ENCODE measurements at regions of chr2 and their contacts with region 1.

Region 1: DNA sequence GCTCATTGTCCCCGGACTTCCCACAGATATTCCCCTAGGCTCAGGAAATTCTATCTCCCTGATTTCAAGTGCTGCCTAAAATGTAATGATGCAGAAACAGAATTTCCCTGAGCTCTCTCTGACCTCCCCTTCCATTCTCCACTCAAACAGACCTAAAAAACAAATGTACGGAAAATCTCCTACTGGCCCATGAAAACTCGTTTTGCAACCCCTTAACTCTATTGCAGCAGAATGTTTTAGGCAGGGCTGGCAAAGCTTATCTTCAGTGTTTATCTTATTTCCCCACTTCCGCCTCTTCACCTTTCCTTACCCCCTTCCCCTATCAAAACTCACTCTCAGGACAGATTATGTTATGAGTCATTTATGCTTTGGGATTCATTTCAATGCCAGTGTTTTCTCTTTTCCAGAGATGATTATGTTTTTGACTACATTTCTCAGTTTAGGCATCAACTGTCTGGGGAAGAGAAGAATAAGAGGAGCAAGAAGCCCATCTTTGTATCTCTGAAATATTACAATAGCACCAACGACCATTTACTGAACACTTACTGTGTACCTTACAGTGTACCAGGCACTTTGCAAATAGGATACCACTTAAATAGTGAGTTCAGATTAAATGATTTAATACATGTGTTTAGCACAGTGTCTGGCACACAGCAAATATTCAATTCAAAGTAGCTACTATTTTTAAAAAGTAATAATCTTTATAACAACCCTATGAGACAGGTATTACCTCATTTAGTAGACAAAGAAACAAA is 53.9 kb upstream of the STPG4 start:
- DNase-seq: peak; percentile 47 to 98
- H3K4me3 ChIP-seq: peak overlapping the region; percentile 10; the same call in 1 of the 2 replicates
- H3K27ac ChIP-seq: peak overlapping the region; percentile 93
- H3K4me1 ChIP-seq: peaks cover 76% of the 10 kb centered on the region
- H3K27me3 ChIP-seq: no peaks in the 10 kb centered on the region
- CTCF ChIP-seq: no peak

Region 2: DNA sequence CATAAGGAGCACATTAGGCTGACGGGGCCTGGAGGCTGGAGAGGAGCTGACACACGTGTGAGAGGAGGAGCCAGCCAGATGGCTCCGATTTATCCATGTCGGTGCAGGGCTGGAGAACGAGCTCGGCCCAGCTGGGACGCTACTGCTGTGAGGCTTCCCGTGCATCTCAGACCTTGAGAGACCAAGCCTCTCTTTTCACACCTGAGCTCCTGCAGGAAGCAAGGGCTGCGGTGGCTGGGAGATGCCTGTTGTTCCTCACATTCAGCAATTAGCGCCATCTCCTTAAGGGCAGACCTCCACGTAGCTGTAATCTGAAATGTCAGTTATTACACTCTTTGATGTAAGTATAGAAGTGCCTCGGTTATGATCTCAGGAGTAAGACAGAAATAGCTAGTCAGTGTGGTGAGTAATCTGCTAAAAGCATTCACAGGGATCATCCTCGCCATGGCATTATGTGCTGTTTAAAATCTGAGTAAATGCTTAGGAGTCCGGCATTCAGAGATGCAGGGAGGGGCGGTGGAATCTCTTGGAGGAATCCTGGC is 1449.6 kb before region 1 on chr2:
- CTCF ChIA-PET with region 1: no interaction called
- POLR2A ChIA-PET with region 1: interaction called, 10 read pairs
- intact Hi-C with region 1: no loop called
- DNase-seq: no peak
- H3K4me3 ChIP-seq: no peak overlapping the region
- H3K27ac ChIP-seq: no peak overlapping the region
- H3K4me1 ChIP-seq: no peaks in the 10 kb centered on the region
- H3K27me3 ChIP-seq: no peaks in the 10 kb centered on the region
- CTCF ChIP-seq: no peak

Region 3: DNA sequence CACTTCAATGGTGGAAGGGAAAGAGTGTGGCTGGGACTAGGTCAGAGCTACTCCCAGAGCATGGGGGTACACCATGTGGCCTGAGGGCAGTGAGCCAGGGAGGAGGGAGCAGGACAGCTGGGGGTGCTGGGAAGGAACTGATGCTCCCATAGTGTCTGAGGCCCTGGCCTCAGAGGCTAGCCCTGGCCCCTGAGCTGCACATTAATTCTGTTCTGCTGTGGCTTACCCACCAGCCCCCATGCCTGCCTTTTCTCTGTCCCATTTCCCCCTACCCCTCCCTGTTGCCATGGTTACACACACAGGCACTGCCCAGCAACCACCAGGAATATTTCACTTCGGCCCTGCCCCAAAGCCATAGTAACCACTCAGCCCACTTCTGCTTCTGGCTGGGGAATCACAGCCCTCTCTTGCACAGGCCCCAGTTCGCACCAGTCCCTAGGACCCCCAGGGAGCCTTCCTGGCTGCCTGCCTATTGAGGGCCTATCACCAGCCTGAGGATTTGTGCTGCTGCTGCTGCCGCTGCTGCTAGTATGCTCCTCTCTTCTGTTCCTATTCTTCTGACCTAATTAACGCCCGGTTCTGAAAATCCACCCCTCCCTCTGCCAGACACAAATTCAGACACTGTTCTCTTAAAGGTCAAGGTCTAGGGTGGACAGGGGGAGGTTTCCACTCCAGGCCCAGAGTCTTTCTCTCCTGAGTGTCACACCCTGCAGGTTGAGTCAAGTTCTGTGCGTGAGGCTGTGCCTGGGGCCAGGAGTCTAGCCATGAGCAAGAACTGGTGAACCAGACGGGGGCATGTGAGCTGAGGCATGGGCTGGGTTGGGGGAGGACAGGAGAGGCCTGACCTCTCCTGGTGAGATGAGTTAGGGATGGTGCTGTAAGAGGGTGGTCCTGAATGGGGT is 206.3 kb before region 1 on chr2:
- CTCF ChIA-PET with region 1: no interaction called
- POLR2A ChIA-PET with region 1: no interaction called
- intact Hi-C with region 1: no loop called
- DNase-seq: peak in 1 of 2 experiments; percentile 53
- H3K4me3 ChIP-seq: no peak overlapping the region
- H3K27ac ChIP-seq: no peak overlapping the region
- H3K4me1 ChIP-seq: peaks cover 32% of the 10 kb centered on the region
- H3K27me3 ChIP-seq: no peaks in the 10 kb centered on the region
- CTCF ChIP-seq: no peak

Region 4: GRCh38 chr2:47198985-47199451 is 10.0 kb before region 1 on chr2:
- CTCF ChIA-PET with region 1: no interaction called
- POLR2A ChIA-PET with region 1: interaction called, 5 read pairs
- intact Hi-C with region 1: loop called (anchors 1 kb)
- DNase-seq: peak; percentile 85 to 99
- H3K4me3 ChIP-seq: no peak overlapping the region
- H3K27ac ChIP-seq: peak overlapping the region; percentile 69
- H3K4me1 ChIP-seq: peaks cover 81% of the 10 kb centered on the region
- H3K27me3 ChIP-seq: no peaks in the 10 kb centered on the region
- CTCF ChIP-seq: no peak

Region 5: DNA sequence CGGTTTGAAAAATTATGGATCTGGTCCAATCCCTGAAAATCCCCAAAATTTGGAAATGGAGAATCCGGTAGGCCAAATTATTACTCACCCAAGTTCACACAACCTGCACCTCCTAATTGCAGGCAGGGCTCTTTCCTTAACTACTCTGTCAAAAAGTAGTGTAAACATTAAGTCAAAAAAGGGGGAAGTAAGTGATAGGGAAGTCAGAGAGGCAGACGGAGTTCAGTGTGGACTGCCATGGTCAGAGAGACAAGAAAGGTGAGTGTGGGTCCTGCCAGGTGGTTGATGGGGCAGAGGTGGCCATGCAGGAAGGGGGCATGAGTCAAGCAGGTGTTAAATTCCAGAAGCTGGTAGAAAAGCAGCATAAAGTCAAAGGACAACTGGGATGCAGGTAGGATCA is 50.8 kb after region 1 on chr2:
- CTCF ChIA-PET with region 1: no interaction called
- POLR2A ChIA-PET with region 1: interaction called, 15 read pairs
- intact Hi-C with region 1: no loop called
- DNase-seq: peak in 1 of 2 experiments; percentile 50
- H3K4me3 ChIP-seq: no peak overlapping the region
- H3K27ac ChIP-seq: no peak overlapping the region
- H3K4me1 ChIP-seq: peaks cover 44% of the 10 kb centered on the region
- H3K27me3 ChIP-seq: no peaks in the 10 kb centered on the region
- CTCF ChIP-seq: no peak

Measured in PC-9 (cell line).